ENCODE measurements at regions of chr1 and their contacts with region 1.

Region 1: DNA sequence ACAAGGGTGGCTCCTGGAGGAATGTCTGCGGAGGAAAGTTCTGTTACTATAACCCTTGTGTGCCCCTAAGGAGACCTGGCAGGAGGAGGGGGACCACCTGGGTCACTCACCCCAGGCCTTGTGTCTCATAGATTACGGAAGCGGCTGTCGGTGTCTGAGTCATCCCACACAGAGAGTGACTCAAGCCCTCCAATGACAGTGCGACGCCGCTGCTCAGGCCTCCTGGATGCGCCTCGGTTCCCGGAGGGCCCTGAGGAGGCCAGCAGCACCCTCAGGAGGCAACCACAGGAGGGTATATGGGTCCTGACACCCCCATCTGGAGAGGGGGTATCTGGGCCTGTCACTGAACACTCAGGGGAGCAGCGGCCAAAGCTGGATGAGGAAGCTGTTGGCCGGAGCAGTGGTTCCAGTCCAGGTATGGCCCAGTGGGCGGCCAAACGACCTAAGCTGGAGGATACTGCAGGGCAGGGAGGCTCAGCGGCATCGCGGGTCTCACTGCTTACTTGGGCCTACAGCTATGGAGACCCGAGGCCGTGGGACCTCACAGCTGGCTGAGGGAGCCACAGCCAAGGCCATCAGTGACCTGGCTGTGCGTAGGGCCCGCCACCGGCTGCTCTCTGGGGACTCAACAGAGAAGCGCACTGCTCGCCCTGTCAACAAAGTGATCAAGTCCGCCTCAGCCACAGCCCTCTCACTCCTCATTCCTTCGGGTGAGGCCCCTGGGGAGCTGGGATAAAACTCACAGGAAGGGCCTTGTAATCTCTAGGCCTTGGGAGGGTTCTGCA is 101.4 kb downstream of the PIK3R3 start:
- DNase-seq: no peak
- ATAC-seq: no peak
- H3K4me3 ChIP-seq: no peak overlapping the region
- H3K27ac ChIP-seq: no peak overlapping the region
- H3K4me1 ChIP-seq: no peaks in the 10 kb centered on the region
- H3K27me3 ChIP-seq: no peaks in the 10 kb centered on the region
- CTCF ChIP-seq: no peak
- POLR2A ChIP-seq: no peak

Region 2: DNA sequence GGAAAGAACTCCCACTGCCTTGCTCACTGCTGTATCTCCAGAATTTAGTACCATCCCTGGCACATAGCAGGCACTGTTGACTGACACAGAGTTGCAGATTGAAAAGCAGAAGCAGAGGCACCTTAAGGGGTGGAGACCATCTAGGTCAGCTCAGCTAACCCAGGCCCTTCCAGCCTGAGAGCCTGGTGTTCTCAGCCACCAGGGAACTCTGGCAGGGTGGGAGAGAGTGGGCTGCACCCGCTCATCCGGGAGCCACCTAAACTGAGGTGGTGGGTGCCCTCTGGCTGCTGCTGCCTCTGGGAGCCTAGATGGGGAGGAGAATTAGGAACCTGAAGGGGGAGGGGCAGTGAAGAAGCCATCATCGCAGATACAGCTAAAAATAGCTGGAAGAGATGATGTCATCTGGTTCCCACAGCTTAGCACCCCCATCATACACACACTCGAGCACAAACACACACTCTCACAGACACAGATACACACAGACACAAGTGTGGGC is 142.3 kb after region 1 on chr1:
- intact Hi-C with region 1: loop called in 1 of 2 experiments (anchors 5 kb)
- DNase-seq: no peak
- ATAC-seq: peak in 1 of 4 donors; percentile 30
- H3K4me3 ChIP-seq: no peak overlapping the region
- H3K27ac ChIP-seq: no peak overlapping the region
- H3K4me1 ChIP-seq: no peaks in the 10 kb centered on the region
- H3K27me3 ChIP-seq: no peaks in the 10 kb centered on the region
- CTCF ChIP-seq: no peak
- POLR2A ChIP-seq: no peak

Region 3: GRCh38 chr1:46223472-46223943 is 192.4 kb after region 1 on chr1:
- intact Hi-C with region 1: loop called in 1 of 2 experiments (anchors 5 kb)
- DNase-seq: peak; percentile 52 to 71 (median 67)
- ATAC-seq: peak; percentile 90 to 98 (median 95)
- H3K4me3 ChIP-seq: no peak overlapping the region
- H3K27ac ChIP-seq: no peak overlapping the region
- H3K4me1 ChIP-seq: no peaks in the 10 kb centered on the region
- H3K27me3 ChIP-seq: no peaks in the 10 kb centered on the region
- CTCF ChIP-seq: peak; percentile 90 to 91 (median 90)
- POLR2A ChIP-seq: no peak

Region 4: DNA sequence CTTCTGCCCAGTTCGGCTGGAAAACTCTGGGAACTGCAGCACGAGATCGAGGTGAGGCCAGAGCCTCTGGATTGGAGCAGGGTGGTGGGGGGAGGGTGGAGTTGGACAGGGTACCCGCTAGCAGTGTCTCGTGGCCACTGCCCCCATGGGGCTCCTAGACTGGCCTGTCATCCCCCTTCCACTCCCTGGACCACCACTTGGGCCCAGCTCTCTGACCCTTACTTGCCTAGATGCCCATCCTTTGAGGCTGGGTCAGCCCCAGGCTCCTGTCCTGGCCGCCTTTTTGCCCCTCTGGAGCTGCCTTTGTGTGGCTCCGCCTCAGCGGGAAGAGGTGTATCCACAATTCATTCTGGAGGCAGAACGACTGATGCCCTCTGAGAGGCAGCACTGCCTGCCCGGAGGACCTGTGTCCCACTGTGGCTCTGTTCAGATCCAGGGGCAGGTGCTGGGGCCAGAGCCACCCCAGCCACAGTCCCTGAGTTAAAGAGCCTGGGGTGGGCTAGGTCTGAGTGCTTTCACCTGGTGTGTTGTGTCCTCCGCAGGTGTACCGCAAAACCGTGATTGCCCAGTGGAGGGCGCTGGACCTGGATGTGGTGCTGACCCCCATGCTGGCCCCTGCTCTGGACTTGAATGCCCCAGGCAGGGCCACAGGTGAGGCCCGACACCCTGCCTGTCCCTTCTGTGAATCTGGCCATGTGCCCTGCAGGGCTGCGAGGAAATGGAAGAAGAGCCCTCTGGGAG is 380.7 kb after region 1 on chr1:
- intact Hi-C with region 1: no loop called
- DNase-seq: peak in 1 of 3 donors; percentile 49
- ATAC-seq: peak in 1 of 4 donors; percentile 6
- H3K4me3 ChIP-seq: no peak overlapping the region
- H3K27ac ChIP-seq: no peak overlapping the region
- H3K4me1 ChIP-seq: no peaks in the 10 kb centered on the region
- H3K27me3 ChIP-seq: no peaks in the 10 kb centered on the region
- CTCF ChIP-seq: peak in 3 of 4 donors; percentile 13 to 20 (median 17)
- POLR2A ChIP-seq: no peak

Measured in right lobe of liver (tissue), 6 donors.